AG04449 (cell line): ENCODE measurements at regions of chr2 and their contacts with region 1.

Region 1: DNA sequence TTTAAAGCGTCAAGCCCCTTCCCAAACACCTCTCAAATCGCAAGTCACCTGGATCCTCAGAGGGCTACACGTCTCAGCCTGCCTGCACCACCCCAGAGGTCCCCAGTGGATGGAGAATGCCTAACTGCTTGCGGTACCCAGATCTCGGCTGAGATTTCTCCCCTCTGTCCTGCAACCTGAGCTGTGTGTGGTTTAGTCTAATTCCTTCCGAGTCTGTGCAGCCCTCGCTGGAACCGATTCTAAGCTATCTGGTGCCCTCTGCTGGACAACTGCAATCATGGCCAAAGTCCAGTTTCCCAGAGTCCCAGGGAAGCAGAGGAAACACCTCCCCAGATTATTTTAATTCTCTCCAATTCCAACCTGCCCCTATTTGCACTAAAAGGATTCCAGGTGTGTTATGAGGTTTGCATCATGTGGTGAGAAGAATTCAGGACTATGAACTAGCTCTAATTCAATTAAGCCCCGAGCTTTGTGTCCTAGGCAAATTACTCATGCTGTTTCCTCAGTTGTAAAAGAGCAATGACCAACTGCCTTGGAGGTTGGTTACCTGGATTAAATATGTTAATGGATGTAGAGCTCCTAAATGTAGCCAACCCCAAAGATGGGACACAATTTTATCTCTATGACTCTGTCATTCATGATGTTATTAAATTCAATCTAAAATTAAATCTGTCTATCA is 276.1 kb upstream of the NCKAP5 start:
- DNase-seq: no peak
- H3K4me3 ChIP-seq: no peak overlapping the region
- CTCF ChIP-seq: peak; percentile 80

Region 2: GRCh38 chr2:132651115-132652045 is 1193.0 kb before region 1 on chr2:
- CTCF ChIA-PET with region 1: interaction called, 14 read pairs
- POLR2A ChIA-PET with region 1: no interaction called
- DNase-seq: no peak
- H3K4me3 ChIP-seq: no peak overlapping the region
- CTCF ChIP-seq: peak; percentile 50

Region 3: DNA sequence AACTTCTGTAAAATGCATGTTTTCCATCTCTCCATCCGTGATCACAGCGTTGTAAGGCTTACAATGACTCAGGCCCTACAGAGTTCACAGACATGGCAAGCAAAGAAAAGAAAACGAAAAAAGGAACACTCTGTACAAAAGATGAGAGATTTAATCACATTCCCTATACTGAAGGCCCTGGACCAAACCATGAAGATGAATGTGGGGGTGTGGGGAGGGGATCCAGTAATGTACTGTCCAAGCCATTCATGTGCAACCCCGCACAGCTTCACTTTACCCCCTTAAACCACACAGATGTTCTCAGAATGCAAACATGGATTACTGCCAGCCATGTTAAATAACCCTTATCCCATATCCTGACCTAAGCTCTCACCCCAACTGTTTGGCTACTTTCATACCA is 667.2 kb before region 1 on chr2:
- CTCF ChIA-PET with region 1: interaction called, 17 read pairs
- POLR2A ChIA-PET with region 1: no interaction called
- DNase-seq: no peak
- H3K4me3 ChIP-seq: no peak overlapping the region
- CTCF ChIP-seq: no peak

Region 4: DNA sequence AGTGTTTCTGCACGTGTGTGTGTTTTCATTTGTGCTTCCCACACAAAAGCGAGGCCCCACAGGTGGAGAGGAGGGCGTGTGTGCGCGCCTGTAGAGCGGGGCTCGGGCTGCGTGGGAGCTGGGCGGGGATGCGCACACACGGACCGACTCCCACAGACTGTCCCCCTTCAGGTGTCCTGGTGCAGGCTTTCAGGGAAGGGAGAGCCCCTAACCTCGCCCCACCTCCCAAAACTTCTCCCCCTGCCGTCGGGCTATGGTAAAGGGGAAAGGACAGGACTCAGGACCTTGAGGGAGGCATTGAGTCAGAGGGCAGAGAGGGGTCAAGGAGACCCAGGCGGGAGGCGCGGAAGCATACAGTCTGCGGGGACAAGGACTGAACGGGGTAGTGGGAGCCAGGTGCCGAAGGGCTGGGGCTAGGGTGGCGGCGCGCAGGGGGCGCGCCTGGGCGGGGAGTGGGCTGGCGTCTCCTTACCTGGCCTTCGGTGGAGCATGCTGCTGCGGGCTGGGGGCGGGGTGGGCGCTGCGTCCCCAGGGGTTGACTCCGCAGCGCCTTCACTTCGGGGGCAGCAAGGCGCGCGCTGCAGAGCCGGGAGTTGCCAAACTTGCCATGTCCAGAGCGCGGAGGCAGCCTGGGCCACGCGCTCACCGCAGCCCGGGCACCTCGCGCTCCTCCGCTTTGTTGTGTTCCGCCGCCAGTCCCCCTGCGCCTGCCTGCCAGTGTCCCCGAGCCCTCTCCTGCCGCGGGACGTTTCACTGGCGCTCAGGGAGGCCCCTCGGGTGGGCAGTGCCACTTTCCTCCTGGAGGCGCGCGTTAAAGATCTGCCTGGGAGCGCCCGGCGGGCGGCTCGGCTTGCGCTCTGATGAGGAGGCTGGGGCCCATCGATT is 578.1 kb before region 1 on chr2:
- CTCF ChIA-PET with region 1: interaction called, 60 read pairs
- POLR2A ChIA-PET with region 1: no interaction called
- DNase-seq: no peak
- H3K4me3 ChIP-seq: peak overlapping the region; percentile 63
- CTCF ChIP-seq: peak; percentile 12

Region 5: GRCh38 chr2:133568172-133568571 is 276.2 kb before region 1 on chr2 and contains the start of gene NCKAP5:
- CTCF ChIA-PET with region 1: interaction called, 33 read pairs
- POLR2A ChIA-PET with region 1: no interaction called
- DNase-seq: no peak
- H3K4me3 ChIP-seq: peak within 1 kb of the TSS; percentile 52
- CTCF ChIP-seq: no peak

Region 6: DNA sequence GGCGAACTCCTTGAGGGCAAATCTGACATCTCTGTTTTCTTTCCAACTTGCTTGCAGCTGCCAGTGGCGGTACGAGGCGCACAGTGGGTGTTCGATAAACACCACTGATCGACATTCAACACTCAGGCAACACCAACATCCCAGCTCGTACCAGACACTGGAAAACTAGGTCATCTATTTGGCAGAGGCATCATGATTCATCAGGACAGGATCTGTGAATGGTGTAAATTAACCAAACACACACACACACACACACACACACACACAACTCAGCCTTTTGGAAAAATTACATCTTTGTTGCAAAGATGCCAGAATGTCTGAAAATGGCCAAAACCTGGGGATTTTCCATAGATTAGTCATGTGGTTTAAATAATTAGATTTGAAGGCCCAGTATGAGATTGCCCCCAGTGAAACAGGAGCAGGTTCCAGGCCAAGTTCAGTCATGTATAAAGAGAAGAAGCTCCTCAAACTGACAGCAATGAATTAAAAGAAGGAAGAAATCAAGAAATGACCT is 125.6 kb before region 1 on chr2:
- CTCF ChIA-PET with region 1: no interaction called
- POLR2A ChIA-PET with region 1: no interaction called
- DNase-seq: peak; percentile 79
- H3K4me3 ChIP-seq: no peak overlapping the region
- CTCF ChIP-seq: no peak

Region 7: GRCh38 chr2:133780099-133780839 is 64.1 kb before region 1 on chr2:
- CTCF ChIA-PET with region 1: interaction called, 21 read pairs
- POLR2A ChIA-PET with region 1: no interaction called
- DNase-seq: no peak
- H3K4me3 ChIP-seq: no peak overlapping the region
- CTCF ChIP-seq: peak; percentile 64

Region 8: DNA sequence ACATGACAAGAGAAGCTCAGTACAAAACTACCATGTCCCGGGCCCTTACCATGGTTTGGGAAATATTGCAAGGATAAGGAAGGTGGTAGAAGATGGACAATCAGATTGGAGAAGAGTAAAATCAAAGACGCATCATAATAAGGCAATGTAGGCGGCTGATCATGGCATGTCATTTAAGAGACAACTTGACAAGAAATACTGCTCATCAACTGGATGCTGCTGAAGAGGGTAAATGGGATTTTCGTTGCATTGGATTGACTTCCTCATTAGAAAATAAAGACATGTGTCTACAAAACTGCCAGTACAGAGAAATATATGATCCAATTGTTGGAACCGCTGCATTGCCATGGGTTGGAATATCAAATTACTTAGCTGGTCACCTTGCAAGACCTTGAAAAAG is 37.8 kb before region 1 on chr2:
- CTCF ChIA-PET with region 1: no interaction called
- POLR2A ChIA-PET with region 1: no interaction called
- DNase-seq: no peak
- H3K4me3 ChIP-seq: no peak overlapping the region
- CTCF ChIP-seq: no peak

Region 9: GRCh38 chr2:133900890-133901289 is 56.5 kb after region 1 on chr2:
- CTCF ChIA-PET with region 1: no interaction called
- POLR2A ChIA-PET with region 1: no interaction called
- DNase-seq: no peak
- H3K4me3 ChIP-seq: no peak overlapping the region
- CTCF ChIP-seq: no peak